PC-9 (cell line): ENCODE measurements at regions of chr13 and their contacts with region 1.

Region 1: GRCh38 chr13:78632996-78633395 is 26.0 kb downstream of the OBI1 start:
- DNase-seq: no peak
- H3K4me3 ChIP-seq: no peak overlapping the region
- H3K27ac ChIP-seq: no peak overlapping the region
- H3K4me1 ChIP-seq: no peaks in the 10 kb centered on the region
- H3K27me3 ChIP-seq: no peaks in the 10 kb centered on the region
- CTCF ChIP-seq: no peak

Region 2: DNA sequence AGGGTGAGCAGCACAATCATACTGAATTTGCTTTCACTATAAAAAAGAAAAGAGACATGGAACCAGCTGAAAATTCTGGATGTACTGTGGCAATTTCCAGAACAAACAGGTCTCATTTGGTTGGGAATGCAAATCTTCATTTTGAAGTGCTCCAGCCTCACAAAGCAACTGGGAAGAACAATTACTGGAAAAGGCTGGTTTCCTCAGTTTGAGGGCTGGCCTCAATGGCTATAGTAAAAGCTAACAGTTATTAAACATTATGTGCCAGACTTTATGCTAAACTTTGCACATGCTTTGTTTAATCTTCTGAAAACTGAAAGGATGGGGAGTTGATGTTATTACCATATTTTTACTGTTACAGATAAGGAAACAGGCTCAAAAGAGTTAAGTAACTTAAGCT is 22.9 kb after region 1 on chr13:
- CTCF ChIA-PET with region 1: no interaction called
- POLR2A ChIA-PET with region 1: no interaction called
- intact Hi-C with region 1: loop called (anchors 1 kb)
- DNase-seq: no peak
- H3K4me3 ChIP-seq: no peak overlapping the region
- H3K27ac ChIP-seq: no peak overlapping the region
- H3K4me1 ChIP-seq: peaks cover 9% of the 10 kb centered on the region
- H3K27me3 ChIP-seq: no peaks in the 10 kb centered on the region
- CTCF ChIP-seq: no peak